Adrenal gland (tissue), 19 donors: ENCODE measurements at regions of chr3 and their contacts with region 1.

Region 1: GRCh38 chr3:50044976-50045375 is 43.7 kb upstream of the RBM5 start:
- DNase-seq: no peak
- H3K4me3 ChIP-seq: no peak overlapping the region
- H3K27ac ChIP-seq: no peak overlapping the region
- H3K4me1 ChIP-seq: peaks cover 0 to 2% of the 10 kb centered on the region in 2 donors
- H3K27me3 ChIP-seq: no peaks in the 10 kb centered on the region
- CTCF ChIP-seq: no peak
- POLR2A ChIP-seq: no peak

Region 2: GRCh38 chr3:49021813-49022687 is 1022.9 kb before region 1 on chr3 and contains the start of gene NDUFAF3:
- intact Hi-C with region 1: loop called in 1 of 2 experiments (anchors 10 kb)
- DNase-seq: peak; percentile 93 to 97 (median 94)
- H3K4me3 ChIP-seq: peak within 1 kb of the TSS; percentile 54 to 91 (median 66)
- H3K27ac ChIP-seq: peak within 1 kb of the TSS; percentile 98 to 100 (median 99)
- H3K4me1 ChIP-seq: peaks cover 22 to 44% of the 10 kb centered on the region in 2 donors
- H3K27me3 ChIP-seq: no peaks in the 10 kb centered on the region
- CTCF ChIP-seq: peak; percentile 89 to 99 (median 96)
- POLR2A ChIP-seq: peak; percentile 91 to 93
- total RNA-seq, gene NDUFAF3: 87.2 to 442 (median 171) TPM